ENCODE measurements at regions of chr22 and their contacts with region 1.

Region 1: DNA sequence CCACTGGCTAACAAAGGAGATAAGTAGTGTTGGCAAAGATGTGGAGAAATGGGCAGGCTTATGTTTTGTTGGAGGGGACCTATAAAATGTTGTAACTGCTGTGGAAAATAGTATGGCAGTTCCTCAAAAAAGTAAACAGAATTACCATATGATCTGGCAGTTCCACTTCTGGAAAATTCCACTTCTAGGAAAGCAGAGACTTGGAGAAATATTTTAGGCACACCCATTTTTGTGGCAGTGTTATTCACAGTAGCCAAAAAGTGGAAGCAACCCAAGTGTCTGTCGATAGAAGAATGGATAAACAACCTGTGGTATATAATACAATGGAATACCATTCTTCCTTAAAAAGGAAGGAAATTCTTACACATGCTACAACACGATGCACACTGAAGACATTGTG is 57.0 kb upstream of the ADORA2A start:
- DNase-seq: peak; percentile 62
- H3K4me3 ChIP-seq: no peak overlapping the region
- H3K27ac ChIP-seq: peak overlapping the region; percentile 16
- H3K4me1 ChIP-seq: peaks cover 6% of the 10 kb centered on the region
- H3K27me3 ChIP-seq: no peaks in the 10 kb centered on the region
- CTCF ChIP-seq: no peak
- POLR2A ChIP-seq: no peak

Region 2: GRCh38 chr22:23857606-23858483 is 512.6 kb before region 1 on chr22 and contains the start of gene SLC2A11:
- CTCF ChIA-PET with region 1: no interaction called
- POLR2A ChIA-PET with region 1: no interaction called
- dilution Hi-C with region 1: no loop called
- intact Hi-C with region 1: no loop called
- DNase-seq: peak; percentile 98
- H3K4me3 ChIP-seq: peak within 1 kb of the TSS; percentile 64 to 83 (median 65)
- H3K27ac ChIP-seq: no peak within 1 kb of the TSS
- H3K4me1 ChIP-seq: peaks cover 15% of the 10 kb centered on the region
- H3K27me3 ChIP-seq: no peaks in the 10 kb centered on the region
- CTCF ChIP-seq: peak in 1 of 2 donors; percentile 32
- POLR2A ChIP-seq: peak; percentile 76
- total RNA-seq, gene SLC2A11: 3.6 and 4.6 TPM in 2 replicates

Region 3: DNA sequence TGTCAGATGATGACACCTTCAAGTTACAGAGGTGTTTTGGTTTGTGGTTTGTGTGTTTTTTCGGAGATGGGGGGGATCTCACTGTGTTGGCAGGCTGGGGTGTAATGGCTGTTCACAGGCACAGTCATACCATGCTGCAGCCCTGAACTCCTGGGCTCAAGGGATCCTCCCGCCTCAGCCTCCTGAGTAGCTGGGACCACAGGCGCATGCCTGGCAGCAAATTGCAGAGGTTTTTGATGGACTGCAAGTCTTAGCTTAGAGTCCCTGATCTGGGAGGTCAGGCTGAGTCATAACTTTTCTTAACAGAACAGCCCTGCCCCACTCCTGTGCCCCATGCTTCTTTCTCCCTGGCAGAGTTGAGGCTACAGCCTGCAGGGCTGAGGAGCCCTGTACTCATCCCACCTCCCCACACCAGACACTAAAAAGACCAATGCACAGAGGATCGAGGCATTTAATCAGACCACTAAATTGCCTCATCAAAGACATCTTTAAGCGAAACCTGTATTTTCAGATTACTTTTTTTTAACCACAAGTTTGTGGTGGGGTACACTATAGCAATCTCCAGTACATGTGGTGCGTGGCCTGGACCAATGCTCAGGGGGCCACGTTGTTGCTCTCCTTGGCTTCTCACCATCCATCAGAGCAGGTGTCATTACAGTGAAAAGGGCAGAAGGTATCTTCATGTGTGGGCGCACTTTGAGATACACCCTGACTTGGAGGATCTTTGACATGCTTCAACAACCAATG is 39.9 kb after region 1 on chr22:
- CTCF ChIA-PET with region 1: no interaction called
- POLR2A ChIA-PET with region 1: no interaction called
- dilution Hi-C with region 1: no loop called
- intact Hi-C with region 1: loop called (anchors 5 kb)
- DNase-seq: no peak
- H3K4me3 ChIP-seq: no peak overlapping the region
- H3K27ac ChIP-seq: no peak overlapping the region
- H3K4me1 ChIP-seq: peaks cover 38% of the 10 kb centered on the region
- H3K27me3 ChIP-seq: no peaks in the 10 kb centered on the region
- CTCF ChIP-seq: no peak
- POLR2A ChIP-seq: no peak